ENCODE measurements at regions of chr13 and their contacts with region 1.

Region 1: GRCh38 chr13:113951246-113951999 is 22.5 kb downstream of the C13orf46 start:
- DNase-seq: peak; percentile 90
- ATAC-seq: peak; percentile 93 to 94

Region 2: DNA sequence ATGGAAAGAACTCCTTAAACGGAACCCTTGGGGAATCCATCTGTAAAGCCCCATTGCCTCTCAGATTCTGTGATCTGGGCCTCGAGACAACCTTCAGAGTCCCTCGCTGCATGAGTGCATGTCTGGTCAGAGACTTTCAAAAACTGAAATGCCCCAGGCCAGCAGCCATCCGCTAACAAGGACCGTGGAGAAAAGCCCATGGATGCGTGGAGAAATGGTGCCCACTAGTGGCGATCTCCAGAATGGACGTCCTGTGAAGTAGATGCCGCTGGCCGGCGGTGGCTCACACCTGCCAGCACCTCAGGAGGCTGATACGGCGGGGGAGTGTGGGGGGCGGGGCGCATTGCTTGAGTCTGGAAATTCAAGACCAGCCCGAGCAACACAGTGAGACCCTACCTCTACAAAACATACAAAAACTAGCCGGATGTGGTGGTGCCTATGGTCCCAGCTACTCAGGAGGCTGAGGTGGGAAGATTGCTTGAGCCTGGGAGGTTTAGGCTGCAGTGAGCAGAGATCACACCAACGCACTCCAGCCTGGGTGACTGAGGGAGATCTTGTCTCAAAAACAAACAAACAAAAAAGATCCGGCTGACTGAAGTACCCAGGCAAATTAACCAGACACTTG is 275.4 kb after region 1 on chr13:
- intact Hi-C with region 1: loop called (anchors 1 to 2 kb)
- DNase-seq: peak; percentile 84
- ATAC-seq: peak; percentile 87 to 93